MCF 10A (cell line): ENCODE measurements at regions of chr12 and their contacts with region 1.

Region 1: GRCh38 chr12:87995581-87996178 is 33.5 kb downstream of the C12orf50 start:
- DNase-seq: peak; percentile 82
- H3K4me3 Mint-ChIP-seq: no peak overlapping the region
- H3K27ac Mint-ChIP-seq: no peak overlapping the region
- H3K4me1 Mint-ChIP-seq: peaks cover 8% of the 10 kb centered on the region
- H3K27me3 Mint-ChIP-seq: no peaks in the 10 kb centered on the region
- CTCF ChIP-seq: peak; percentile 78

Region 2: GRCh38 chr12:87866578-87867292 is 128.9 kb before region 1 on chr12:
- CTCF ChIA-PET with region 1: no interaction called
- POLR2A ChIA-PET with region 1: no interaction called
- intact Hi-C with region 1: loop called (anchors 5 kb)
- DNase-seq: peak; percentile 38
- H3K4me3 Mint-ChIP-seq: no peak overlapping the region
- H3K27ac Mint-ChIP-seq: no peak overlapping the region
- H3K4me1 Mint-ChIP-seq: peaks cover 8% of the 10 kb centered on the region
- H3K27me3 Mint-ChIP-seq: no peaks in the 10 kb centered on the region
- CTCF ChIP-seq: peak; percentile 34

Region 3: DNA sequence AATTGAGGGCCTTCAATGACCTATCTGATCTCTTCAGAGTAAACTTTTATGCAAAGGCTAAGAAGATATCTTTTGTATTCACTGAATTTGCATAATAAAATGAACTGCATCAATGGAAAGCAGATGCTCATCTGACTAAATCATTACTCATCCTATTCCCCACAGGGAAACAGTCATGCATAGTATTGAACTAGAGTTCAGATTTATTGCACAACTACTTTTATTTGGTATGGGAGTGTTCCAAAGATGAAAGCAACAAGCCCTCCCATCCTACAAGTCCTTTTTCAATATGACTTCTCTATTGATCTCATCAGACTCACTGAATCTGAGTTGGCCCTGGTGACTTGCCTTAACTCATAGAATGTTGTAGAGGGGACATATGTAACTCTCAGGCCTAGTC is 424.8 kb after region 1 on chr12:
- CTCF ChIA-PET with region 1: no interaction called
- POLR2A ChIA-PET with region 1: no interaction called
- intact Hi-C with region 1: no loop called
- DNase-seq: peak; percentile 84
- H3K4me3 Mint-ChIP-seq: no peak overlapping the region
- H3K27ac Mint-ChIP-seq: no peak overlapping the region
- H3K4me1 Mint-ChIP-seq: peaks cover 15% of the 10 kb centered on the region
- H3K27me3 Mint-ChIP-seq: no peaks in the 10 kb centered on the region
- CTCF ChIP-seq: no peak